Activated T-helper 1 cell treated with anti-CD3 and anti-CD28 coated beads, Interleukin-12 subunit alpha, Interleukin-12 subunit beta, Interleukin-2, Interleukin-4 antibody, amounts not matched to agents 30 ng/mL and 10 ng/mL and 1 ng/mL, durations not matched to agents 14 hours and 24 hours and 36 hours (primary cell): ENCODE measurements at regions of chr4 and their contacts with region 1.

Region 1: GRCh38 chr4:105708530-105709391 is at the starts of genes GSTCD and INTS12:
- DNase-seq: peak; percentile 83
- H3K4me3 Mint-ChIP-seq: peak within 1 kb of the TSS; percentile 99
- H3K27ac Mint-ChIP-seq: peak within 1 kb of the TSS; percentile 95
- H3K4me1 Mint-ChIP-seq: peaks cover 21% of the 10 kb centered on the region
- H3K27me3 Mint-ChIP-seq: no peaks in the 10 kb centered on the region
- total RNA-seq, gene GSTCD: 17.0 and 20.9 TPM in 2 replicates
- total RNA-seq, gene INTS12: 18.7 and 22.4 TPM in 2 replicates

Region 2: DNA sequence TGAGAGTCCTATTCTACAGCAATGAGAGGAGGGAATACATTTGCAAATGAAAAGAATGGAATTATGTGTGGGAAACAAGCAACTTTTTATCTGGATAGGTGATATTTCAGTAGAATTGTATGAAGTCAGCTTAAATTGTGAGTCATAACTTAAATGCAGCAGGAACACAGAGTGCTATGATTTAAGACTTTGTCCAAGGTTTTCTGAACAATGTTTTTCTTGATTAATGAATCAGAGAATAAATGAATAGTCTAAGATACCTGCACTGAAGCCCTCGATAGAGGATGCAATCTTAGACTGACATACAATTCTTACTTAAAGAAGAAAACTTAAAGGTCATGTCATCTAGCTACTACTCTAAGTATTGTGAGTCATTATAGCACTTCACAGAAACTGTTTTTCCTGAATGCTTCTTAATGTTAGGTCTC is 148.3 kb before region 1 on chr4:
- intact Hi-C with region 1: no loop called
- DNase-seq: no peak
- H3K4me3 Mint-ChIP-seq: no peak overlapping the region
- H3K27ac Mint-ChIP-seq: no peak overlapping the region
- H3K4me1 Mint-ChIP-seq: no peaks in the 10 kb centered on the region
- H3K27me3 Mint-ChIP-seq: peaks cover 7% of the 10 kb centered on the region

Region 3: DNA sequence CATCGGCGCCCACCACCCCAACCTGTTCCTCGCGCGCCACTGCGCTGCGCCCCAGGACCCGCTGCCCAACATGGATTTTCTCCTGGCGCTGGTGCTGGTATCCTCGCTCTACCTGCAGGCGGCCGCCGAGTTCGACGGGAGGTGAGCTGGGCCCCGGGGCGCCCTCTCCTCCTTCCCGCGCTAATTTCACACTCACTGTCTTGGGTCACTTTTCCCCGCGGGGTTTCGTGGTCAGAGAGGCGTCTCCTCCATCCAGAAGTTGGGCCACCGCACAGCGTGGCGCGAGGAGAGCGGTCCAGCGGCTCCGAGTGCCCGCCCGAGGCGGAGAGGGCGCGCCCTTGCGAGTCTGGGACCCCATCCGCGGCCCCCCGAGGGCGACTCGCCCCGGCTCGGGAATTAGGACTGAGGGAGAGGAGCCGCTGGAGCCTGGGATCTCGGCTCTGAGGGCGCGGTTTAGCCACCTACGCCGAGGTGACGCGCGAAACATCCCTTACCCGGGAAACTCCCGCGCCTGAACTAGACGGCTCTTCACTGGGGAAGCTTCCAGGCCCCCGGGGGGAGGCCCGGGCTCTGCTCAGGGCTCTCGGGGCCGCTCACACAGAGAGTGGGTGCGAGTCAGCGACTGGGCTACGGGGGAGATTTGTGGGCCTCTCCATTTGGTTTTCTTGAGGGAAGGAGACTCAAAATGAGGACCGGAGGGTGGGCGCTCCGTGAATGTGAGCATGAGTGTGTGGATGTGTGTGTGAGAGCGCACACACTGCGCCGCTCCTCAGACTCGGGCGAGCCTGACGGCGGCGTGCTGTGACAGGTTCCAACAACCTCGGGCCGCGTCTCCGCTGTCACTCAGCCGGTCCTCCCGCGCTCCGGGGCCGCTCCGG is 187.1 kb after region 1 on chr4:
- intact Hi-C with region 1: loop called (anchors 10 kb)
- DNase-seq: no peak
- H3K4me3 Mint-ChIP-seq: peak overlapping the region; percentile 73
- H3K27ac Mint-ChIP-seq: peak overlapping the region; percentile 61
- H3K4me1 Mint-ChIP-seq: no peaks in the 10 kb centered on the region
- H3K27me3 Mint-ChIP-seq: peaks cover 57% of the 10 kb centered on the region